IMR-90 (cell line): ENCODE measurements at regions of chr1 and their contacts with region 1.

Region 1: DNA sequence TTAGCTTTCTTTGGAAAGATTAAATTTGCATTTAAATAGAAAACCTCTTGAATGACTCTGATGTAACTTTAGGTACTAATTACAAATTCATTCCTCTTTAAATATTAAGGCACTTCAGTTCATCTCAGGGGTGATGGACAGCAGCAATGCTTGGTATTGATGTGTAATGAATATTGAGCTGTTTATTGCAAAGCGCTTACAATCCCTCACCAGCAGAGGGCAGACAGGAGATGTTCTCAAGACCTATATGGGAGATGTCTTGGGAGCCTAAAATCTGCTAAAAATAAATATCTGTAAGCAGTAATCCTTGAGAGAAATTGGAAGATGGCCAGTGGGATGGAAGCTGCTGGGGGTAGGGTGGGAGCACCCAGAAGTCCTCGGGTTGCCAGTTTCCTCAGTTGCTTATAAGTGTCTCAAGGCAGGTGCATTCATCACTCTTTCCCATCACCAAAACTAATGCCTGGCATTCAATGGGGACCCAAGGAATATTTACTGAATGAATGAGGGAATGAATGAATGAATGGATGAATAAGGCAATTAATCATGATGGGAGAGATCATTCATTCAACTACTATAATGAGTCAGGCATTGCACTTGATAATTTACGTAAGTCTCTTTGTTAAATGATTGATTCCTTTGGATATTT is 2.3 kb downstream of the KLHDC8A start:
- DNase-seq: peak; percentile 76
- ATAC-seq: peak; percentile 85
- H3K4me3 ChIP-seq: no peak overlapping the region
- H3K27ac ChIP-seq: no peak overlapping the region
- H3K4me1 ChIP-seq: no peaks in the 10 kb centered on the region; the same call in 1 of the 2 replicates
- H3K27me3 ChIP-seq: peaks cover 47% of the 10 kb centered on the region
- CTCF ChIP-seq: peak; percentile 90
- POLR2A ChIP-seq: no peak
- RAD21 ChIP-seq: peak; percentile 81

Region 2: GRCh38 chr1:205068457-205069040 is 285.8 kb before region 1 on chr1:
- CTCF ChIA-PET with region 1: no interaction called
- POLR2A ChIA-PET with region 1: no interaction called
- dilution Hi-C with region 1: no loop called
- in situ Hi-C with region 1: no loop called
- intact Hi-C with region 1: no loop called
- DNase-seq: peak; percentile 30
- ATAC-seq: no peak
- H3K4me3 ChIP-seq: no peak overlapping the region
- H3K27ac ChIP-seq: no peak overlapping the region
- H3K4me1 ChIP-seq: no peaks in the 10 kb centered on the region
- H3K27me3 ChIP-seq: peaks cover 6% of the 10 kb centered on the region
- CTCF ChIP-seq: no peak
- POLR2A ChIP-seq: no peak
- RAD21 ChIP-seq: no peak

Region 3: GRCh38 chr1:205258716-205259115 is 95.7 kb before region 1 on chr1:
- CTCF ChIA-PET with region 1: no interaction called
- POLR2A ChIA-PET with region 1: no interaction called
- dilution Hi-C with region 1: no loop called
- in situ Hi-C with region 1: no loop called
- intact Hi-C with region 1: no loop called
- DNase-seq: peak; percentile 51
- ATAC-seq: 0 out of 2 replicates have a peak, but pooled peaks have one; percentile 20
- H3K4me3 ChIP-seq: no peak overlapping the region
- H3K27ac ChIP-seq: no peak overlapping the region
- H3K4me1 ChIP-seq: peaks cover 26% of the 10 kb centered on the region
- H3K27me3 ChIP-seq: no peaks in the 10 kb centered on the region
- CTCF ChIP-seq: no peak
- POLR2A ChIP-seq: no peak
- RAD21 ChIP-seq: no peak

Region 4: GRCh38 chr1:205303247-205303888 is 51.0 kb before region 1 on chr1:
- CTCF ChIA-PET with region 1: no interaction called
- POLR2A ChIA-PET with region 1: no interaction called
- dilution Hi-C with region 1: no loop called
- in situ Hi-C with region 1: no loop called
- intact Hi-C with region 1: no loop called
- DNase-seq: no peak
- ATAC-seq: no peak
- H3K4me3 ChIP-seq: no peak overlapping the region
- H3K27ac ChIP-seq: peak overlapping the region; percentile 78
- H3K4me1 ChIP-seq: peaks cover 23% of the 10 kb centered on the region
- H3K27me3 ChIP-seq: no peaks in the 10 kb centered on the region
- CTCF ChIP-seq: no peak
- POLR2A ChIP-seq: no peak
- RAD21 ChIP-seq: no peak

Region 5: DNA sequence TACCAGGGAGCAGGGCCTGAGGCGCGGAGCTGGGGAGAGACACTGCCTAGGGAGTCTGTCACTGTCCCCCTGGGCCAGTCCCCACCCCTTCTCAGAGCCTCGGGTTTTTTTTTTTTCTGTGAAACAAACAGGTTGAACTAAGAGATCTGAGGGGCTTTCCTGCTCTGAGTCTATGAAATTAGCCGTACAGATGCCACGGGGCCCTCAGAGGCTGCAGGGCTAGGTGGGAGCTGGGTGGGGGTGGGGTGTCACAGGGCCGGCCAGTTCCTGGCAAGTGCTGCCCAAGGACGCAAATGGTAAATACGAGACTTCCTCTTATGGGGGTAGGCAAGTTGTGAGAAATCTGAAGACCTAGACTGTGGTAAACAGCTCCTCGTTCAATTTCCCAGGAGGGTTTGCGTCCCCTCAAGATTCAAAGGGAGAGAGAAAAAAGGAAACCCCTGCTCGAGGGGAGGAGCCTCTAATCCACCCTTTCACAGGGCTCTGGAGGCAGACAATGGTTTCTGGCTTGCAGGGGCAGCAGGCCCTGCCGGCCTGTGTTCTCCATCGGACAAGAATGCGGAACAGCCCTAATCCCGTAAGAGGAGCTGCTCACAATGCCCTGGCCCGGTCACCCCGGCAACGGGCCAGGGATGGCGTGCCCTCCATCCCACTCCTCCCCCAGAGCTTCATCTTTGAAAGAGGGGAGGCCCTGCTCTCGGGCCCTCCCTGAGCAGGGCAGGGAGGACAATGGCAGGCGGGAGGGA is 40.6 kb before region 1 on chr1:
- CTCF ChIA-PET with region 1: no interaction called
- POLR2A ChIA-PET with region 1: no interaction called
- dilution Hi-C with region 1: no loop called
- in situ Hi-C with region 1: no loop called
- intact Hi-C with region 1: no loop called
- DNase-seq: peak; percentile 86
- ATAC-seq: peak; percentile 82
- H3K4me3 ChIP-seq: peak overlapping the region; percentile 0; the same call in 1 of the 2 replicates
- H3K27ac ChIP-seq: peak overlapping the region; percentile 90
- H3K4me1 ChIP-seq: peaks cover 42% of the 10 kb centered on the region
- H3K27me3 ChIP-seq: no peaks in the 10 kb centered on the region
- CTCF ChIP-seq: no peak
- POLR2A ChIP-seq: no peak
- RAD21 ChIP-seq: no peak

Region 6: DNA sequence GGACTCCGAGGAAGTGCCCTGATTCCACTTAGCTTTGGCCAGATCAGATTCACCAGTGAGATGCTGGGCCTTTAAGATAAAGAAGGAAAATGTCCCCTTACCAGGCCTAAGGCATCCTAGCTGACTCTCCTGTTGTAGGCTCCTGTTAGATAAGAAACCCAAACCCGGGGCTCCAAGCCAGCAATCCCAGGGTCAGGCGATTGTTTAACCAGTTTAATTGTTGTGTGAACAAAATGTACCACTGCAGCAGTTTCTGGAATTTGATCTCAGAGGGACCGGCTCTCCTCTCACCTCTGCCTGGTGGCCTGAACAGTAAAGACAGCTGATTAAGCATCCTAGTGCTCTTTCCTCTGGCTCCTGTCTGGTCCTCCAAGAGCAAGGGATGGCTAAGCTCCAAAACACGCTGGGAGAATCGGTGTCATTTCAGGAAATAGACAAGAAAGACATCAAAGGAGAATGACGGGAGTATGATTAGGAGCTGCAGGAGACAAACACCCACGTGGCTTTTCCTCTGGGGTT is 11.6 kb after region 1 on chr1:
- CTCF ChIA-PET with region 1: interaction called, 11 read pairs
- POLR2A ChIA-PET with region 1: no interaction called
- dilution Hi-C with region 1: no loop called
- in situ Hi-C with region 1: no loop called
- intact Hi-C with region 1: no loop called
- DNase-seq: no peak
- ATAC-seq: no peak
- H3K4me3 ChIP-seq: no peak overlapping the region
- H3K27ac ChIP-seq: no peak overlapping the region
- H3K4me1 ChIP-seq: no peaks in the 10 kb centered on the region
- H3K27me3 ChIP-seq: peaks cover 11% of the 10 kb centered on the region
- CTCF ChIP-seq: no peak
- POLR2A ChIP-seq: no peak
- RAD21 ChIP-seq: no peak

Region 7: GRCh38 chr1:205430696-205431305 is 76.4 kb after region 1 on chr1:
- CTCF ChIA-PET with region 1: interaction called, 4 read pairs
- POLR2A ChIA-PET with region 1: no interaction called
- dilution Hi-C with region 1: no loop called
- in situ Hi-C with region 1: no loop called
- intact Hi-C with region 1: loop called (anchors 2 kb)
- DNase-seq: peak; percentile 33
- ATAC-seq: peak; percentile 91
- H3K4me3 ChIP-seq: peak overlapping the region; percentile 48
- H3K27ac ChIP-seq: no peak overlapping the region
- H3K4me1 ChIP-seq: no peaks in the 10 kb centered on the region
- H3K27me3 ChIP-seq: peaks cover 75% of the 10 kb centered on the region
- CTCF ChIP-seq: peak; percentile 75
- POLR2A ChIP-seq: no peak
- RAD21 ChIP-seq: peak; percentile 72

Region 8: GRCh38 chr1:205485338-205486228 is 131.2 kb after region 1 on chr1:
- CTCF ChIA-PET with region 1: interaction called, 35 read pairs
- POLR2A ChIA-PET with region 1: no interaction called
- dilution Hi-C with region 1: no loop called
- in situ Hi-C with region 1: loop called (anchors 5 kb)
- intact Hi-C with region 1: loop called (anchors 1 kb)
- DNase-seq: peak; percentile 59
- ATAC-seq: peak; percentile 95
- H3K4me3 ChIP-seq: no peak overlapping the region
- H3K27ac ChIP-seq: no peak overlapping the region
- H3K4me1 ChIP-seq: no peaks in the 10 kb centered on the region
- H3K27me3 ChIP-seq: peaks cover 46% of the 10 kb centered on the region
- CTCF ChIP-seq: peak; percentile 90
- POLR2A ChIP-seq: no peak
- RAD21 ChIP-seq: peak; percentile 92

Region 9: GRCh38 chr1:205523891-205524793 is 169.8 kb after region 1 on chr1:
- CTCF ChIA-PET with region 1: interaction called, 16 read pairs
- POLR2A ChIA-PET with region 1: no interaction called
- dilution Hi-C with region 1: no loop called
- in situ Hi-C with region 1: no loop called
- intact Hi-C with region 1: loop called (anchors 1 kb)
- DNase-seq: peak; percentile 59
- ATAC-seq: peak; percentile 76
- H3K4me3 ChIP-seq: no peak overlapping the region
- H3K27ac ChIP-seq: no peak overlapping the region
- H3K4me1 ChIP-seq: peaks cover 3% of the 10 kb centered on the region; the same call in 1 of the 2 replicates
- H3K27me3 ChIP-seq: peaks cover 29% of the 10 kb centered on the region
- CTCF ChIP-seq: peak; percentile 84
- POLR2A ChIP-seq: no peak
- RAD21 ChIP-seq: peak; percentile 91